Activated CD8-positive, alpha-beta memory T cell treated with anti-CD3 and anti-CD28 coated beads, Interleukin-2, amount 10 ng/mL, durations not matched to agents 7 days and 5 days (primary cell): ENCODE measurements at regions of chr14 and their contacts with region 1.

Region 1: DNA sequence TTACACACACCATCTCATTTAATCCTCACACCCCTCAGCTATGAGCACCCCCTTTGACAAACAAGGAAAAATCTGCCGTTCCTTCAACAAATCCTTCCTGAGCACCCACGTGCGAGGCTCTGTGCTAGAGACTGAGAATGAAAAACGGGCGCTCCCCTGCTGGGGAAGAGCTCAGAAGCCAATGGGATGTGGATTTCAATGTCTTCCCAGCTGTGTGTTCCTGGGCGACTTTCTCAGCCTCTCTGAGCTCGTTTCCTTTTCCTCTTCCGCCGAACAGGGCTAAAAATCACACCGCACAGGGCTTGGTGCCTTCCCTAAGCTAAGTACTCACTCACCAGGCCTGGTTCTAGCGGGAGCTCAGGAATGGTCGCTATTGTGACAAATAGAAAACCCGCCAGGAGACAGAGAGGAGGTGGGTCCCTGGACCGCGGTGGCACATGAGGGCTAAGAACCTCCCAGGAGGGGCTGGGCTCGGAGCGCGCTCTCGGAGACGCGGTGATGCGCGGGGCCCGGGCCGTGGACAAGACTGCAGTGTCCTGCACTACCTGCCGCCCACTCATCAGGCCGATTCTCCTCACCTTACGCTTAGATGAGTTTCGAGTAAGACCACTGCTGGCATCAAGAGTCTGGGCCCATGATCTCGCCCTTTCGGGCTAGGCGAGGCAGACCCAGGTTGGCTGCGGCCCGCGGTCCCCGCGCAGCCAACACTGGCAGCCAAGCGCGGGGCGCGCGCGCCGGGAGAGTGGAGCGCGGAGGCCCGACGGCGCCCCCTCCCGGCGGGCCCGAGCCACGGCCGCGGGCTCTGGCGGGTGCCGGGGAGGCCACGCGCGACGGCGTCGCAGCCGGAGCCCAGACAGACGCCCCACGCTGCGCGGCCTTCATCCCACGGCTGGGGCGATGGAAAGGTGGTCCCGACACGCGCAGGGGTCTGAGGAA is 17.0 kb downstream of the ZDHHC22 start:
- DNase-seq: peak; percentile 58
- ATAC-seq: peak; percentile 85
- H3K4me3 Mint-ChIP-seq: peak overlapping the region; percentile 62
- H3K27ac Mint-ChIP-seq: no peak overlapping the region
- H3K4me1 Mint-ChIP-seq: peaks cover 35% of the 10 kb centered on the region
- H3K27me3 Mint-ChIP-seq: peaks cover 46% of the 10 kb centered on the region

Region 2: DNA sequence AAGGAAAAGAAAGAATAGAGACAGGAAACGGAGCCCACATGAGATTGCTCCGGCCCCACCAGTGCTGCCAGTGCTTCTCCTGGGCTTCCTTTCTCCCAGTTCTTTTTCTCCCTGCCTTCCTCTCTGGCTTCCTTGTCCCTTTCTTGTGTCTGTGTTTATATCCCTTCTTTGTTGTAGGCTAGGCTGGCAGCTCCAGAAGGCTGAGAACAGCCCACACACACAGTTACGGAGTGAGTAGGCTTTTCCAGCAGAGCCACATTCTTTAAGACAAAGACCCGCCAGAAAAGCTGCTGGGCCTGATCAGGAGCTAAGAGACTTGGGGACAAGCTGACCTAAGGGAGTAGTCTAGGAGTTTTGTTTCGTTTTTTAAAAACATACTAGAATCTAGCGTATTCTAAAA is 13.6 kb before region 1 on chr14:
- CTCF ChIA-PET with region 1: interaction called, 15 read pairs
- DNase-seq: no peak
- ATAC-seq: no peak
- H3K4me3 Mint-ChIP-seq: no peak overlapping the region
- H3K27ac Mint-ChIP-seq: no peak overlapping the region
- H3K4me1 Mint-ChIP-seq: no peaks in the 10 kb centered on the region
- H3K27me3 Mint-ChIP-seq: no peaks in the 10 kb centered on the region

Region 3: GRCh38 chr14:77208291-77208969 is 83.8 kb after region 1 on chr14:
- CTCF ChIA-PET with region 1: no interaction called
- DNase-seq: peak; percentile 72
- ATAC-seq: peak; percentile 57
- H3K4me3 Mint-ChIP-seq: no peak overlapping the region
- H3K27ac Mint-ChIP-seq: no peak overlapping the region
- H3K4me1 Mint-ChIP-seq: no peaks in the 10 kb centered on the region
- H3K27me3 Mint-ChIP-seq: no peaks in the 10 kb centered on the region

Region 4: DNA sequence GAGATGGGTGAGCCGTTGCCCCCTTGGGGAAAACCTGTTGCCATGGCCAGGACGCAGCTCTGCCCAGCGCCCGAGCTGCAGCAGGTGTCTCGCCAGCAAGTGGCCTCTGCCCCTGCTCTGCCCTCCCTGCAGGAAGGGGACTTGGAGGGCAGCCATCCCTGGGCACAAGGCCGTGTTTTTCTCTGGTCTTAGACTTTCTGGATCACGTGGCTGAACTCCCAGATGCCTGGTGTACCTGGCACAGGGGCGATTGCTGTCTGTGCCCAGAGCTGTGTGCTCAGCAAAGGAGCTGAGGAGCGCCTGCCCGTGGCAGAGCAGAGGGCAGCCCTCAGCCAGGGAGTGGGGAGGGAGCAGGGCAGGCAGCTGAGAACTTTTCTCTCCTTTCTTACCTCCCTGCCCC is 95.0 kb after region 1 on chr14:
- CTCF ChIA-PET with region 1: no interaction called
- DNase-seq: no peak
- ATAC-seq: no peak
- H3K4me3 Mint-ChIP-seq: no peak overlapping the region
- H3K27ac Mint-ChIP-seq: no peak overlapping the region
- H3K4me1 Mint-ChIP-seq: no peaks in the 10 kb centered on the region
- H3K27me3 Mint-ChIP-seq: peaks cover 4% of the 10 kb centered on the region